Naive thymus-derived CD8-positive, alpha-beta T cell (primary cell): ENCODE measurements at regions of chr11 and their contacts with region 1.

Region 1: GRCh38 chr11:65919146-65920033 is at the start of gene DRAP1:
- DNase-seq: peak; percentile 95 to 100 (median 98)
- ATAC-seq: peak; percentile 86 to 92
- H3K4me3 Mint-ChIP-seq: peak within 1 kb of the TSS; percentile 88 to 97 (median 92)
- H3K27ac Mint-ChIP-seq: peak within 1 kb of the TSS; percentile 77 to 96 (median 92)
- H3K4me1 Mint-ChIP-seq: peaks cover 19 to 65% (median 48%) of the 10 kb centered on the region in 4 donors
- H3K27me3 Mint-ChIP-seq: no peaks in the 10 kb centered on the region
- polyA plus RNA-seq, gene DRAP1: 103 to 112 (median 110) TPM

Region 2: GRCh38 chr11:65900125-65900898 is 19.1 kb before region 1 on chr11 and contains the start of gene FOSL1:
- POLR2A ChIA-PET with region 1: interaction called, 183 read pairs
- DNase-seq: peak; percentile 85 to 95 (median 91)
- ATAC-seq: peak; percentile 93 to 98
- H3K4me3 Mint-ChIP-seq: peak within 1 kb of the TSS; percentile 57 to 80 (median 74)
- H3K27ac Mint-ChIP-seq: peak within 1 kb of the TSS in 9 of 10 donors; percentile 41 to 94 (median 72)
- H3K4me1 Mint-ChIP-seq: peaks cover 2 to 24% (median 10%) of the 10 kb centered on the region in 4 donors
- H3K27me3 Mint-ChIP-seq: peaks cover 0 to 4% (median 0%) of the 10 kb centered on the region in 5 donors
- polyA plus RNA-seq, gene FOSL1: 0.17 to 0.22 TPM in 2 of 3 donors, not detected in the other